Tibial artery (tissue), 4 donors: ENCODE measurements at regions of chr19 and their contacts with region 1.

Region 1: GRCh38 chr19:29873024-29873800 is 61.4 kb downstream of the CCNE1 start:
- DNase-seq: no peak
- H3K4me3 ChIP-seq: peak overlapping the region; percentile 12 to 42
- H3K27ac ChIP-seq: no peak overlapping the region
- H3K4me1 ChIP-seq: peaks cover 4 to 23% (median 13%) of the 10 kb centered on the region in 4 donors
- H3K27me3 ChIP-seq: peaks cover 3 to 54% of the 10 kb centered on the region in 2 donors
- CTCF ChIP-seq: peak; percentile 74 to 82

Region 2: GRCh38 chr19:29735800-29736199 is 137.4 kb before region 1 on chr19:
- intact Hi-C with region 1: loop called (anchors 10 kb)
- DNase-seq: no peak
- H3K4me3 ChIP-seq: no peak overlapping the region
- H3K27ac ChIP-seq: no peak overlapping the region
- H3K4me1 ChIP-seq: no peaks in the 10 kb centered on the region
- H3K27me3 ChIP-seq: peaks cover 0 to 41% of the 10 kb centered on the region in 2 donors
- CTCF ChIP-seq: no peak

Region 3: DNA sequence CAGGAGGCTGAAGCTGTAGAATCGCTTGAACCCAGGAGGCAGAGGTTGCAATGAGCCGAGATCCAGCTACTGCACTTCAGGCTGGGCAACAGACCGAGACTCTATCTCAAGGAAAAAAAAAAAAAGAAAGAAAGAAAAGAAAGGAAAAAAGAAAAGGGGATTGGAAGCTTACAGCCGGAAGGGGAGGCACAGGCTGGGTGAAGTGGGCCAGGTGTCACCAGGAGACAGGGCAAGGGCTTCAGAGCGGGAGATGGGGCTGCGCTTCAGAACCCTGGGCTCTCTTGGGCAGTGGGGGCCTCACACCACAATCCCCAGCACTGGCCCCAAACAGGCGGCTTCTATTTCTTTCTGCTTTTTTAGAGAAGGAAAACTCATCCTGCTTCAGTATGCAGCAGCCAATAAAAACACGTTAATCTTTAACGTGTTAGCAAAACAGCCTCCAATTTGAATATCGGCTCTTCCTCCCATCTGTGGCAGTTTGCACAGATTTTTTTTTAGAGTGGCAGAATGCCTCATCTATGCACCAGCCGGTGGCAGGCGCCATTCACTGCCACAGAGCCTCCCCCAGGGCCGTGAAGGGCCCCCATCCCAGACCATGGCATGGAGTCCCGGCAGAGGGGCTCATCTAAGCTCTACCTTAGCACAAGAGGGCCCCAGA is 111.5 kb before region 1 on chr19:
- intact Hi-C with region 1: loop called (anchors 5 kb)
- DNase-seq: no peak
- H3K4me3 ChIP-seq: no peak overlapping the region
- H3K27ac ChIP-seq: no peak overlapping the region
- H3K4me1 ChIP-seq: peaks cover 0 to 5% (median 2%) of the 10 kb centered on the region in 4 donors
- H3K27me3 ChIP-seq: peaks cover 0 to 53% of the 10 kb centered on the region in 2 donors
- CTCF ChIP-seq: no peak

Region 4: DNA sequence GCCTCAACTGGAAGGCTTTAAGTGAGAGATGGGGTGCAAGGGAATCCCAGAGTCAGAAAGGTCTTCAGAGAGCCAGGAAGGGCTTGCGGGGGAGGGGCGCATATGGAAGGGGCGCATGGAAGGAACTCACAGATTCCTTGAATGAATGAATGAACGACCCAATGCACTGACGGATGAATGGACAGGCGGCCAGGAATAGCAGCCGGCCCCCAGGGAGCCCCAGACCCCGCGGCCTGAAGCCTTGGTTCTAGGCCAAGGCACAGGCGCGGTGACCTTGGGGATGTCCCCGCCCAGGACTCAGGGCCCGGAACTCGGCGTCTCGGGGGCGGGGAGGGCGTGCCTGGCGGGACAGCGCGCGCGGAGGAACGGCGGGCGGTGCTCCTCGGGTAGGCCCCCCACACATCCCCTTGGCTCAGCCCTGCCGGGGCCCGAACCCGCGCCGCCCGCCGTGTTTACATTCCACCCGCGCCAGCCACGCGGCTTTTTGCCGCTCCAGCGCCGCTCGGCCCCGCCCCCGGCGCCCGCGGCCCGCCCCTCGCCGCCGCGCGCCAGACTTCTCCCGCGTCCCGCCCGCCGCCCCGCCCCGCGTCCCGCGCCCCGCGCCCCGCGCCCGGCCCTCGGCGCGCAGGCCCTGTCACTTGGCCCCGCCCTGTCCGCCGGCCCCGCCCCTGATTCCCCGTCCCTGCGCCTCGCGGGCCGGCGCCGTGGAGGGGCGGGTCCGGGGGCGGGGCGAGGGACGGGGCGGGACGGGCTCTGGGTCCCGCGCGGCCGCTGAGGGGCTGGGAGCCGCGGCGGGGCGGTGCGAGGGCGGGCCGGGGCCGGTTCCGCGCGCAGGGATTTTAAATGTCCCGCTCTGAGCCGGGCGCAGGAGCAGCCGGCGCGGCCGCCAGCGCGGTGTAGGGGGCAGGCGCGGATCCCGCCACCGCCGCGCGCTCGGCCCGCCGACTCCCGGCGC is 61.8 kb before region 1 on chr19 and contains the start of gene CCNE1:
- intact Hi-C with region 1: loop called (anchors 2 kb)
- DNase-seq: peak; percentile 89 to 93
- H3K4me3 ChIP-seq: peak within 1 kb of the TSS; percentile 54 to 75
- H3K27ac ChIP-seq: peak within 1 kb of the TSS in 1 of 2 donors; percentile 51
- H3K4me1 ChIP-seq: peaks cover 0 to 16% (median 10%) of the 10 kb centered on the region in 4 donors
- H3K27me3 ChIP-seq: no peaks in the 10 kb centered on the region
- CTCF ChIP-seq: no peak

Region 5: GRCh38 chr19:30207357-30207756 is 334.1 kb after region 1 on chr19:
- intact Hi-C with region 1: no loop called
- DNase-seq: no peak
- H3K4me3 ChIP-seq: no peak overlapping the region
- H3K27ac ChIP-seq: no peak overlapping the region
- H3K4me1 ChIP-seq: no peaks in the 10 kb centered on the region
- H3K27me3 ChIP-seq: no peaks in the 10 kb centered on the region
- CTCF ChIP-seq: no peak